ENCODE measurements at regions of chr6 and their contacts with region 1.

Region 1: GRCh38 chr6:99467509-99468106 is 42.5 kb upstream of the PNISR start:
- DNase-seq: no peak
- H3K4me3 ChIP-seq: no peak overlapping the region
- H3K27ac ChIP-seq: no peak overlapping the region
- H3K4me1 ChIP-seq: no peaks in the 10 kb centered on the region
- H3K27me3 ChIP-seq: no peaks in the 10 kb centered on the region
- CTCF ChIP-seq: peak; percentile 72

Region 2: GRCh38 chr6:99588618-99589289 is 121.1 kb after region 1 on chr6:
- intact Hi-C with region 1: no loop called
- DNase-seq: peak; percentile 50
- H3K4me3 ChIP-seq: peak overlapping the region; percentile 67
- H3K27ac ChIP-seq: no peak overlapping the region
- H3K4me1 ChIP-seq: peaks cover 28% of the 10 kb centered on the region
- H3K27me3 ChIP-seq: peaks cover 94% of the 10 kb centered on the region
- CTCF ChIP-seq: peak; percentile 60

Region 3: GRCh38 chr6:99746261-99746895 is 278.8 kb after region 1 on chr6:
- intact Hi-C with region 1: loop called (anchors 5 kb)
- DNase-seq: no peak
- H3K4me3 ChIP-seq: no peak overlapping the region
- H3K27ac ChIP-seq: no peak overlapping the region
- H3K4me1 ChIP-seq: peaks cover 9% of the 10 kb centered on the region
- H3K27me3 ChIP-seq: peaks cover 17% of the 10 kb centered on the region
- CTCF ChIP-seq: peak; percentile 90